Dendritic cell treated with granulocyte-macrophage colony-stimulating factor and Interleukin-4, amounts not matched to agents 40 ng/mL and 50 ng/mL, for 4 days (primary cell): ENCODE measurements at regions of chr22 and their contacts with region 1.

Region 1: GRCh38 chr22:22431271-22432220 is 77.0 kb downstream of the ZNF280B start:
- H3K4me3 Mint-ChIP-seq: no peak overlapping the region
- H3K27ac Mint-ChIP-seq: no peak overlapping the region
- H3K4me1 Mint-ChIP-seq: no peaks in the 10 kb centered on the region
- H3K27me3 Mint-ChIP-seq: peaks cover 34% of the 10 kb centered on the region

Region 2: DNA sequence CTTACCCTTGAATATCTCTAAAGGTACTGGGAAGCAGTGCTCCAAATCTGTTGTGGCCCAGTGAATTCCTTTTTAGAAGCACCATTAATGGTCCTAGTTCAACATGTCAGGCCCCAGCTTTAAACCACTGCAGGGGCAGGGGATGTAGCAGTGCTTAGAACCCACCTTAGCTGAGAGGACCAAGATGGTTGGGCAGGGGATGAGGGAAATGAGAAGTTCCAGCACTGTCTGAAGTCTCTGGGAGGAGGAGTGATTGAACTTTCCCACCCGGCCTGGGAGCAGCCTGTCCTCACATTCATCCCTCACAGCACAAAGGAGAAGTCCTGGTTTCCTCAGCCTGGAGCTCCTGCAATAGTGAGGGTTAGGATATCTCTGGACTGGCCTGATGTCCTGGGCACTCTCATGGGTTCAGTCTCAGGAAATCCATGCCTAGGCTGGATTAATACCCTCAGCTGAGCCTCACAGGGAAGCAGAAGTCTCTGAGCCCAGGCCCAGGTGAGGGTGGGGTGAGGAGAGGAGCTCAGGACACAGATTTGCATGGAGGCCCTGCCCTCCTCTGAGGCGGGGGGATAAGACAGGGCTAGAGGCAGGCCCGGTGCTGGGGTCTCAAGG is 156.1 kb after region 1 on chr22:
- intact Hi-C with region 1: loop called (anchors 10 kb)
- H3K4me3 Mint-ChIP-seq: no peak overlapping the region
- H3K27ac Mint-ChIP-seq: no peak overlapping the region
- H3K4me1 Mint-ChIP-seq: no peaks in the 10 kb centered on the region
- H3K27me3 Mint-ChIP-seq: peaks cover 12% of the 10 kb centered on the region

Region 3: DNA sequence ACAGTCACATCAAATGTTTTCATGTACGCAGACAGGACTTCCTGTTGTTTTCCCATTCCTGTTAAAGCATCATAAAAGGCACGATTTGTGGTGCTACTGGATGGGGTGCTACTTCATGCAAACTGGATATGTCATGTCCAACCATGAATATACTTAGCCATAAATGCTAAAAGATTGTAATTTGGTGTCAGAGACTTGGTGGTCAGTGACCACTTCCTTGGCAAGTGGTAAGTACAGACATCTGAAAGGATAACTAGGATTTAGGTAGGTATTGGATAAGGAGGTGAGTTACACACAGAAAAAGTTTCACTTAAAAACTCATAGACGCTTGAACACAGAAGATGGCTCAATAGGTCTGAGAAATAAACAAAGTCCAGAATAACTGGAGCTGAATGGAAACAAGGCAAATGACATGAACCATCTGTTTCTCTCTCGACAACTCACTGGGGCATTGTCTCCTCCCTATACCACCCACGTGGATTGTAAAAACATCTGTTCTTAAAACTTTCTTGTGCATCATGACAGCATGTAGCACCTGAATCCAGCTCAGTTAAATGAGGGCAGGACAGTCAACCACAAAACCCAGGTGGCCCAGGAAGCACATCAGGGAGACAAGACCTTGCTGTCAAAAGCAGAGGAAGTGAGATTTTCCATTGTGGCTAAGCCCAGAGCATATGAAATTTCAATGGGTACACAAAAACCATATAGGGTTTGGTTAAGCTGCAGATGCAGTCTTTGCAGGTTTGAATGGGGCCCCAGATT is 433.9 kb after region 1 on chr22:
- intact Hi-C with region 1: no loop called
- H3K4me3 Mint-ChIP-seq: no peak overlapping the region
- H3K27ac Mint-ChIP-seq: no peak overlapping the region
- H3K4me1 Mint-ChIP-seq: peaks cover 26% of the 10 kb centered on the region
- H3K27me3 Mint-ChIP-seq: peaks cover 14% of the 10 kb centered on the region